ENCODE measurements at regions of chr2 and their contacts with region 1.

Region 1: DNA sequence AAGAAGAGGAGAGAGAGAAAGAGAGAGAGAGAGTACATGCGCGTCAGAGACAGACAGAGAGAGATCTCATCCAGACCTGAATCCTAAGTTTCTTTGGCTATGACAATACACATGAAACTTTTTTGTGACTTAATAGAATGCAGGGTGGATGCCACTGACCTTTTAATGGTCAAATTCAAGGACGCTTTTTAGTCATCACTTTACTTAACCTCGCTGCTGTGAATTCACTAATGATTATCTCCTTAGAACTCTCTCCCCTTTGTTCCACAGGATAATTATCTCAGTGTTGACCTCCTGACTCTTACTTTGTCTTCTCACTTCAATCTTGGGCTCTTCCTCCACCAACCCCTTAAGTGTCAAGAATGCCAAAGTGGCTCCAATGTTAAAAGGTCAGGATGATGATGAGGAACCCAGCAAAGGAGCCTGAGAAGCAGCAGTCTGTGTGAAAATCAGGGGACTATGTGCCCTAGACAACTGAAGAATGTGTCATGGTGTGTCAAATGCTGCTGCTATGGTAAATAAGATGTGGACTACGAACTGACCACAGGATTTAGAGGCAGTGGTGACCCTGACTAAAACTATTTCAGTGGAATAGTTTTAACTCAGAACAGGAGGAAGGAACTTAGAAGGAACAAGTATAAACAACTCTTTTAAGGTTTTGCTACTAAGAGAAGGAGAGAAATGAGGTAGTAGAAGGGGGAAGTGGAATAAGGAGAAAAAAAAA is 382.1 kb downstream of the ZEB2 start:
- H3K4me3 Mint-ChIP-seq: peak overlapping the region; percentile 7
- H3K27ac Mint-ChIP-seq: peak overlapping the region; percentile 89
- H3K4me1 Mint-ChIP-seq: peaks cover 55% of the 10 kb centered on the region
- H3K27me3 Mint-ChIP-seq: no peaks in the 10 kb centered on the region

Region 2: DNA sequence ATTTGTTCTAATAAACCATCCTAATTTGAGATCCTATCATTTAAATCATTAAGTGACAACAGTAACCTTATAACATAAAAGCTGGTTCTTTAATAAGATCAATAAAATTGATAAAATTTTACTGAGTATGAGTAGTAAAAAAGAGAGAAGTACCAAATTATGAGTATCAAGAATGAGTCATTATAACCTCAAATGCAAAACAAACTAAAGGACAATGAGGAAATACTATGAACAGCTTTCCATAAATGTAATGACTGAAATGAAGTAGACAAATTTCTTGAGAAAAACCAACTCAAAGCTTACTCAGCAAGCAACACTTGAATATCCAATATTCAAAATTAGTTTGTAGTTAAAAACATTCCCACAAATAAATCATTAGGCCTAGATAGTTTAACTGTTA is 50.9 kb before region 1 on chr2:
- intact Hi-C with region 1: loop called (anchors 2 kb)
- H3K4me3 Mint-ChIP-seq: peak overlapping the region; percentile 40
- H3K27ac Mint-ChIP-seq: peak overlapping the region; percentile 95
- H3K4me1 Mint-ChIP-seq: peaks cover 46% of the 10 kb centered on the region
- H3K27me3 Mint-ChIP-seq: no peaks in the 10 kb centered on the region

Region 3: GRCh38 chr2:144162652-144163051 is 24.8 kb after region 1 on chr2:
- intact Hi-C with region 1: no loop called
- H3K4me3 Mint-ChIP-seq: no peak overlapping the region
- H3K27ac Mint-ChIP-seq: no peak overlapping the region
- H3K4me1 Mint-ChIP-seq: peaks cover 8% of the 10 kb centered on the region
- H3K27me3 Mint-ChIP-seq: no peaks in the 10 kb centered on the region